ENCODE measurements at regions of chr3 and their contacts with region 1.

Region 1: DNA sequence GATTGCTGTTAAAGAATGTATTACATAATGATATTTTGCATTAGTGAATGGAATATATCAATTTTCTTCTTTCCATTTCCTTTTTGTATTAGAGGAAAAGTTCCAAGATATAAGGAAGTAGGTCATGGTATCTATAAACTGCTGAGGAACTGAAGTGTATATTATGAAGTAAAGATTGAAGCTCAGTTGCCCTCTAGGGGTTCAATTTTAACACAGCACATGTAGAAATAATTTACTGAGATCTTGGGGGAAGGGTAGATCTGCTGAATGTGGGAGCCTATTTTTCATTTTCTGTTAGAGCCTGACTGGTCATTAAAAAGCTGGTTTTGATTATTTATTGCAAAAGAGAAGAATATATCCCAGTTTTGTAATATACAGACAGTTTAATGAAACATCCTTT is 45.2 kb downstream of the CMC1 start:
- DNase-seq: peak; percentile 27
- H3K4me3 ChIP-seq: no peak overlapping the region
- H3K27ac ChIP-seq: no peak overlapping the region
- H3K4me1 ChIP-seq: no peaks in the 10 kb centered on the region
- H3K27me3 ChIP-seq: no peaks in the 10 kb centered on the region
- CTCF ChIP-seq: peak; percentile 50 to 61

Region 2: DNA sequence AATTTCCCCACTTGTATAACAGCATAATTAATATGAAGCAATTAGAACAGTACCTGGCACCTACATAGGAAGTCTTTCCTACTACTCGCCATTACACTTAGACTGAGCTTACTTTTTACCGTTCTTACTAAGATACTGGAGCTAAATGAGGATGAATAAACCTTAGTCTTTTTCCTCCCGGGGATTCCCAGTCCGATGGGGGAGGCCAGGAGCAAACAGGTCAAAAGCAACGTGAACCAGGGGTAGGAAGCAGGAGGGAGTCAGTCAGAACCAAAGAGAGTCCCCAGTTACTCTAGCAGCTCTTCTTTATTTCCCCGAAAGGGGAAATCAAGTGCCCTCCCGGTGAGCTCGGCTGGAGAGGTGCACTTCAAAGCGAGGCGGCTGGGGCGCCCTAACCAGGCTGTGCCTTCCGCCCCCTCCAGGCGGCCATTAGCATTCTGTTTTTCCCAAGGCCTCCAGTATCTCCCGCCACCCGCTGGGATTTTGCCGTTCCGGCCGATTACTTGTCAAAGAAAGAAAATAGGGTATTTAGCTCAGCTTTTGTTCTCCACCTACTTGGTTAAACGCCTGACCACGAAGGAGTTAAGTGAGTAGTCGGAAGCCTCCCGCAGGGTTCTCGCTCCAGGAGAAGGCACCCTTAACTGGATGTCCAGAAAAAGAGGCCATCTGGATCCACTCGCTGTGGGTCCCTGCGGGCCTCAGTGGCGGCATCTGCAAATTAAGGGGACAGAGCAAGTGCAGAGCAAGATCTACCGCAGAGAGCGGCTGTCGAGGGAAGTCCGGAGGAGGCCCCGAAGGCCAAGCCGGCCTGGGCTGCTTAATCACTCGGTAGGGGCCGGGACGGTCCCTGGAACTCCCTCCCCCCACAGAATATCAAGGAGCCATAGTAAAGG is 558.2 kb before region 1 on chr3:
- CTCF ChIA-PET with region 1: no interaction called
- dilution Hi-C with region 1: no loop called
- in situ Hi-C with region 1: no loop called
- intact Hi-C with region 1: loop called (anchors 1 kb)
- DNase-seq: no peak
- H3K4me3 ChIP-seq: no peak overlapping the region
- H3K27ac ChIP-seq: no peak overlapping the region
- H3K4me1 ChIP-seq: peaks cover 11% of the 10 kb centered on the region
- H3K27me3 ChIP-seq: peaks cover 24% of the 10 kb centered on the region
- CTCF ChIP-seq: peak in 1 of 2 donors; percentile 7

Region 3: DNA sequence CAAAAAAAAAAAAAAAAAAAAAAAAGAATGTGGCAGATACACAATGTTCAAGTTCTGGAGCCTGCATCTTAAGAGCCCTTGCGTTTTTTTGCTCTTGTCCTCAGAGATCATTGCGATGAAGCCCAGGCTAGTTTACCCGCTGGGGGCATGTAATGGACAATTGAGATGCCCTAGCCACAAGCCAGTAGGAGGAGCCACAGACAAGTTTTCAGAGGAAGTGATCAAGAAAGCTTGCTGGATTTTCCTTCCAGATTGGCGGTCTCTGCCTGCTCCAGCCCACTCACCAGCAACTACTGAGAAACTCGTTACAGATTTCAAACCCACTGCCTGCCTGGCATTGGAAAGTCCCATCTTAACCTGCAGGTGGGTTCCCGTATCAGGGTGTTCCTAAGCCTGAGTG is 372.4 kb before region 1 on chr3:
- CTCF ChIA-PET with region 1: no interaction called
- dilution Hi-C with region 1: no loop called
- in situ Hi-C with region 1: no loop called
- intact Hi-C with region 1: loop called (anchors 10 kb)
- DNase-seq: peak; percentile 6
- H3K4me3 ChIP-seq: no peak overlapping the region
- H3K27ac ChIP-seq: no peak overlapping the region
- H3K4me1 ChIP-seq: no peaks in the 10 kb centered on the region
- H3K27me3 ChIP-seq: peaks cover 2% of the 10 kb centered on the region
- CTCF ChIP-seq: peak in 1 of 2 donors; percentile 32

Region 4: DNA sequence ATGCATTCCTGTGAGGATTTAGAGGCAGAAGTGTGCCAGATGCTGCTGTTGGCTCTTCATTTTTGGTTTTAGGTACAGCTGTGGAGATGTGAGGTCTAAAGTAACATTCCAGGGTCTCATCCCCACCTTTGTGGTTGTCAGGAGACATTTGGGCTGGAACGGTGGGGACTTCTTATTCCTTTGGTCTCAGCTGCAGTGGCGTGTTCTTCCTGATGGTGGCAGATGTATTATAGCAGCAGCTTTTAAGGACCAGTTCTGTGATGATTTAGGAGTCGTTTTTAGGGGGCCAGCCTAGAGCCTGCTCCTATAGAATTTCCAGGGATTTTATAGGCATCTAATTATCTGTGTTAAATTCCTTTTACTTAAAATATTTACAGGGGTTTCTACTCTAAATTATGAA is 343.5 kb before region 1 on chr3:
- CTCF ChIA-PET with region 1: no interaction called
- dilution Hi-C with region 1: no loop called
- in situ Hi-C with region 1: no loop called
- intact Hi-C with region 1: loop called (anchors 1 kb)
- DNase-seq: peak; percentile 20
- H3K4me3 ChIP-seq: no peak overlapping the region
- H3K27ac ChIP-seq: no peak overlapping the region
- H3K4me1 ChIP-seq: no peaks in the 10 kb centered on the region
- H3K27me3 ChIP-seq: no peaks in the 10 kb centered on the region
- CTCF ChIP-seq: peak; percentile 34 to 58

Region 5: DNA sequence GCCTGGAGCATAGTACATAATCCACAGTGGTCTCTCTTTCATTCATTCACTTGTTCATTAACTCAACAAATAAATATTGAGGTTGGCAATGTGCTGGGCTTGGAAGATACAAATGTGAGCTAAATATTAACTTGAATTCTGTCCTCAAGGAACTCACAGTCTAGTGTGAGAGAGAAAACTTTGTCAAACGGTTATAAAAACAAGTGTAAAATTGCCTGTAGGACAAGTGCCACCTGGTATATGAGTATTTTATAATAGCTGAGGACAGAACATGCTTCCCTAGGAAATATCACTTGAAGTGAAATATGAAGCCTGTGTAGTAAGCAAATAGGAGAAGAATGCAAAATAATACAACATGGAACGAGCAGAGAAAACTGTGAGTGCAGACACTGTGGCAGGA is 218.3 kb before region 1 on chr3:
- CTCF ChIA-PET with region 1: no interaction called
- dilution Hi-C with region 1: no loop called
- in situ Hi-C with region 1: no loop called
- intact Hi-C with region 1: no loop called
- DNase-seq: no peak
- H3K4me3 ChIP-seq: no peak overlapping the region
- H3K27ac ChIP-seq: no peak overlapping the region
- H3K4me1 ChIP-seq: no peaks in the 10 kb centered on the region
- H3K27me3 ChIP-seq: peaks cover 3% of the 10 kb centered on the region
- CTCF ChIP-seq: no peak

Region 6: DNA sequence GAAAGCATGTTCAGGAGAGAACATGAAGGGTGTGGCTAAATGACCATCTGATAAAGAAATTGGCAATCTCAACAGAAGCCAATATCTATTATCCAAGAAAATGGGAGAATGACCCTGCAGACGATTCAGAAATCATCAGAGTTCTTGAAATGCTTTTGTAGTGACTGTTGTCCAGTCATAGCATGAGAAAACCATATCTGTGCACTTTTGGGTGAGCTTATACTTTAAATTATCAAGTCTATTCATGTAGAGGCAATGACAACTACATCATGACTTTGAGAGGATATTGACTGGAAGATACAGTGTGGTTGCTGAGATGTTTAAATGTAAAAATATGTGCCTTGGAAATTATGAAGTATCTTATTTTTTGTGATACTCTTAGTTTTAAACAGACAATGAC is 119.6 kb after region 1 on chr3:
- CTCF ChIA-PET with region 1: no interaction called
- dilution Hi-C with region 1: no loop called
- in situ Hi-C with region 1: no loop called
- intact Hi-C with region 1: no loop called
- DNase-seq: peak; percentile 15
- H3K4me3 ChIP-seq: no peak overlapping the region
- H3K27ac ChIP-seq: no peak overlapping the region
- H3K4me1 ChIP-seq: no peaks in the 10 kb centered on the region
- H3K27me3 ChIP-seq: no peaks in the 10 kb centered on the region
- CTCF ChIP-seq: no peak

Region 7: GRCh38 chr3:28916713-28917499 is 630.3 kb after region 1 on chr3:
- CTCF ChIA-PET with region 1: no interaction called
- dilution Hi-C with region 1: no loop called
- in situ Hi-C with region 1: no loop called
- intact Hi-C with region 1: no loop called
- DNase-seq: peak; percentile 52
- H3K4me3 ChIP-seq: peak overlapping the region in 1 of 3 experiments; percentile 15
- H3K27ac ChIP-seq: peak overlapping the region; percentile 23
- H3K4me1 ChIP-seq: peaks cover 9% of the 10 kb centered on the region
- H3K27me3 ChIP-seq: no peaks in the 10 kb centered on the region
- CTCF ChIP-seq: peak; percentile 66 to 81

Measured in mammary epithelial cell (primary cell).